ENCODE measurements at regions of chr10 and their contacts with region 1.

Region 1: GRCh38 chr10:37700886-37701780 is 156.3 kb downstream of the ZNF248 start:
- DNase-seq: no peak
- ATAC-seq: no peak

Region 2: GRCh38 chr10:37535459-37536246 is 165.5 kb before region 1 on chr10:
- intact Hi-C with region 1: loop called (anchors 10 kb)
- DNase-seq: no peak
- ATAC-seq: no peak

Region 3: DNA sequence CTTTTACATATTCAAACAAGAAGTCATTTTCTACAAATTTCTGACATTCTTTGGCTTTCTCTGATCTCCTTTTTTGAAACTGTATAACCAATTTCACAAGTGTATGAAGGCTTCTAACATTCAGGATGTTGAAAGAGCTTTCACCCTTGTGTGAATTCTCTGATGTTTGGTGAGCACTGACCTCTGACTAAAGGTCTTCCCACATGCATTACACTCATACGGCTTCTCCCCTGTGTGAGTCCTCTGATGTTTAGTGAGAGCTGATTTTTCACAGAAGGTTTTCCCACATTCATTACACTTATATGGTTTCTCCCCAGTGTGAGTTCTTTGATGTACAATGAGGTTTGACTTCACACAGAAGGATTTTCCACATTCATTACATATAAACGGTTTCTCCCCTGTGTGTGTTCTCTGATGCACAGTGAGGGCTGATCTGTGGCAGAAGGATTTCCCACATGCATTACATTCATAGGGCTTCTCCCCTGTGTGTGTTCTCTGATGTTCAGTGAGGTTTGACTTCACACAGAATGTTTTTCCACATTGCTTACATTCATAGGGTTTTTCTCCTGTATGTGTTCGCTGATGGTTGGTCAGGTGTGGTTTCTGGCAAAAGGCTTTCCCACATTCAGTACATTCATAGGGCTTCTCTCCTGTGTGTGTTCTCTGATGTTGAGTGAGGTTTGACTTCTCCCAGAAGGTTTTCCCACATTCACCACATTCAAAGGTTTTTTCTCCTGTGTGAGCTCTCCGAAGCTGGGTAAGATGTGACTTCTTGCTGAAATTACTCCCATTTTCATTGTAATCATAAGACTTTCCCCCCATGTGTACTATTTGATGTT is 130.6 kb after region 1 on chr10:
- intact Hi-C with region 1: no loop called
- DNase-seq: no peak
- ATAC-seq: no peak

Measured in Right ventricle myocardium inferior (tissue), 1 donor.